B cell (primary cell): ENCODE measurements at regions of chr17 and their contacts with region 1.

Region 1: GRCh38 chr17:44218344-44219107 is 949 bp downstream of the UBTF start:
- DNase-seq: peak; percentile 93
- ATAC-seq: peak; percentile 46
- H3K4me3 ChIP-seq: peak overlapping the region; percentile 61 to 87 (median 74)
- H3K4me3 Mint-ChIP-seq: peak overlapping the region; percentile 84
- H3K27ac ChIP-seq: peak overlapping the region; percentile 88 to 89
- H3K27ac Mint-ChIP-seq: peak overlapping the region; percentile 98
- H3K4me1 ChIP-seq: peaks cover 49 to 53% of the 10 kb centered on the region in 2 donors
- H3K4me1 Mint-ChIP-seq: peaks cover 56% of the 10 kb centered on the region
- H3K27me3 ChIP-seq: no peaks in the 10 kb centered on the region
- H3K27me3 Mint-ChIP-seq: no peaks in the 10 kb centered on the region
- CTCF ChIP-seq: peak; percentile 52

Region 2: GRCh38 chr17:44044067-44044466 is 174.5 kb before region 1 on chr17:
- CTCF ChIA-PET with region 1: no interaction called
- POLR2A ChIA-PET with region 1: no interaction called
- intact Hi-C with region 1: no loop called
- DNase-seq: no peak
- ATAC-seq: no peak
- H3K4me3 ChIP-seq: no peak overlapping the region
- H3K4me3 Mint-ChIP-seq: no peak overlapping the region
- H3K27ac ChIP-seq: no peak overlapping the region
- H3K27ac Mint-ChIP-seq: no peak overlapping the region
- H3K4me1 ChIP-seq: no peaks in the 10 kb centered on the region
- H3K4me1 Mint-ChIP-seq: peaks cover 9% of the 10 kb centered on the region
- H3K27me3 ChIP-seq: no peaks in the 10 kb centered on the region
- H3K27me3 Mint-ChIP-seq: no peaks in the 10 kb centered on the region
- CTCF ChIP-seq: no peak

Region 3: GRCh38 chr17:44070455-44071197 is 147.9 kb before region 1 on chr17 and contains the start of gene G6PC3:
- CTCF ChIA-PET with region 1: no interaction called
- POLR2A ChIA-PET with region 1: no interaction called
- intact Hi-C with region 1: loop called (anchors 1 kb)
- DNase-seq: peak; percentile 85
- ATAC-seq: peak; percentile 73
- H3K4me3 ChIP-seq: peak within 1 kb of the TSS; percentile 42 to 87 (median 73)
- H3K4me3 Mint-ChIP-seq: peak within 1 kb of the TSS; percentile 93
- H3K27ac ChIP-seq: peak within 1 kb of the TSS; percentile 31 to 65
- H3K27ac Mint-ChIP-seq: peak within 1 kb of the TSS; percentile 82
- H3K4me1 ChIP-seq: peaks cover 22 to 32% of the 10 kb centered on the region in 2 donors
- H3K4me1 Mint-ChIP-seq: peaks cover 36% of the 10 kb centered on the region
- H3K27me3 ChIP-seq: no peaks in the 10 kb centered on the region
- H3K27me3 Mint-ChIP-seq: no peaks in the 10 kb centered on the region
- CTCF ChIP-seq: no peak
- total RNA-seq, gene G6PC3: 26.7 and 28.5 TPM in 2 replicates

Region 4: DNA sequence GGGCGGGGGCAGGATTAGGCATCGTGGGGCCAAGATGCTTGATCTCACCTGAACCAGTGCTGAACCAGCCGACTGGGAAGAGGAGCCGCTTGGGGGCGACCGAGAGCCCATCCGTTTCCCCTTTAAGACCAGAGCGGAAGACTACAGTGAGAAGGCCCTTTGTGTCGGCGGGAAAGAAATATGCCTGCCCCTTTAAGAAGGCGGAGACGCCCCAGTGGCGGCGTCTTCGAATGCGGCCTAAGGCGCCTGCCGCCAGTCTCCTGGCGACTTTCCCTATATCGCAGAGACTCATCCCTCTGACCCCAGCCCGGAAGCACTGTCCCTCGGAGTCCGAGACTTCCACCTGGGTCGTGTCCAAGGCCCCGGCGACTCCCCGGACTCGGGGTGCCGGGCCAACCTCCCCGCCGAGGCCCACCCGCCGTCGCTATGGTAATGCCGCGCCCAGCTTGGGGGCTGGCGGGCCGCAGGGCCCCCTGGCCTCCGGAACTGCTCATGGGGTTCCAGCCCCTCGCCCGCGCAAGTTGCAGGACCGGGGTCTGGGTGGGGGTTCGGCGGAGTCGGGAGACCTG is 76.7 kb before region 1 on chr17 and contains the start of gene HROB:
- CTCF ChIA-PET with region 1: interaction called, 4 read pairs
- POLR2A ChIA-PET with region 1: no interaction called
- intact Hi-C with region 1: loop called (anchors 2 kb)
- DNase-seq: peak; percentile 97
- ATAC-seq: peak; percentile 99
- H3K4me3 ChIP-seq: peak within 1 kb of the TSS; percentile 41 to 85 (median 76)
- H3K4me3 Mint-ChIP-seq: peak within 1 kb of the TSS; percentile 87
- H3K27ac ChIP-seq: peak within 1 kb of the TSS; percentile 57 to 84
- H3K27ac Mint-ChIP-seq: peak within 1 kb of the TSS; percentile 61
- H3K4me1 ChIP-seq: peaks cover 9 to 11% of the 10 kb centered on the region in 2 donors
- H3K4me1 Mint-ChIP-seq: peaks cover 8% of the 10 kb centered on the region
- H3K27me3 ChIP-seq: peaks cover 0 to 20% (median 3%) of the 10 kb centered on the region in 4 experiments
- H3K27me3 Mint-ChIP-seq: peaks cover 14% of the 10 kb centered on the region
- CTCF ChIP-seq: peak; percentile 84
- total RNA-seq, gene HROB: 2.7 and 3.2 TPM in 2 replicates

Region 5: DNA sequence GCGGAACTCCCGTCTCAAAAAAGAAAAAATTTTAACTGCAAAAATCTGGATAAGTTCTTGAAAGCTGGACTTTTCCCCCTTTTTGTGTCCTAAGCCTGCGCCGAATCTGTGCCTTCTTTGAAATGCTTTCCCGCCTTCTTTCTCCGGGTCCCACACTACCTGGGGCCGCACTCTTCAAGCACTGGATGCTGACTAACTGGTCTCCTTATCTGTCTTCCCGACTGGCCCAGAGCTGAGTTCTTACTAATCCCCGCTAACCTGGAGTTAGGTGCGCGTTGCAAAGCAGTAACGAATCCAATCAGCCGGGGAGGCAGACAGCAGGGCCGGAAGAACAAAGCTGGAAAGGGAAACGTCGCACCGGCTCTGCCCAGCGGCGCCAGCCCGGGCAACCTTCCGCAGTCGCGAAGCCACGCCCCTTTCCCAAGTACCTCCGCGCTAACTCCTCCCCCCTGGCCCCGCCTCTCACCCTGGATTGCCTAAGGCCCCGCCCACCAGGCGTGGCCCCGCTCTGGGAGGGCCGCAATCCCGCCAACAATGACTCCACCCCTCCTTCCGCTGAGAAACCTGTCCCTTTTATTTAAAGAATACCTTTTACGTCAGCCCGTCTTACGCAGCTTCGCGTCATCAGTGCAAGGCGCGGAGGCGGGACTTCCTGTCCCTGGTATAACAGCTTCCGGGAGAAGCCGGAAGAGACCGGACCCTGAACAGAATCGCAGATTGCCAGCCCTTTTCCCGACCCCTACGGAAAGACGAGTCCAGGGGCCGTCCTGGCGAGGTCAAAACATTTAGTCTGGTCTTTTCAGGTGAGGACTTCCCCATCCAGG is 32.0 kb before region 1 on chr17 and contains the start of gene TMUB2:
- CTCF ChIA-PET with region 1: interaction called, 8 read pairs
- POLR2A ChIA-PET with region 1: interaction called, 13 read pairs
- intact Hi-C with region 1: loop called (anchors 1 kb)
- DNase-seq: peak; percentile 100
- ATAC-seq: peak; percentile 97
- H3K4me3 ChIP-seq: peak within 1 kb of the TSS; percentile 63 to 99 (median 90)
- H3K4me3 Mint-ChIP-seq: peak within 1 kb of the TSS; percentile 98
- H3K27ac ChIP-seq: peak within 1 kb of the TSS; percentile 93 to 97
- H3K27ac Mint-ChIP-seq: peak within 1 kb of the TSS; percentile 100
- H3K4me1 ChIP-seq: peaks cover 22 to 26% of the 10 kb centered on the region in 2 donors
- H3K4me1 Mint-ChIP-seq: peaks cover 40% of the 10 kb centered on the region
- H3K27me3 ChIP-seq: no peaks in the 10 kb centered on the region
- H3K27me3 Mint-ChIP-seq: no peaks in the 10 kb centered on the region
- CTCF ChIP-seq: no peak
- total RNA-seq, gene TMUB2: 50.9 and 52.3 TPM in 2 replicates

Region 6: DNA sequence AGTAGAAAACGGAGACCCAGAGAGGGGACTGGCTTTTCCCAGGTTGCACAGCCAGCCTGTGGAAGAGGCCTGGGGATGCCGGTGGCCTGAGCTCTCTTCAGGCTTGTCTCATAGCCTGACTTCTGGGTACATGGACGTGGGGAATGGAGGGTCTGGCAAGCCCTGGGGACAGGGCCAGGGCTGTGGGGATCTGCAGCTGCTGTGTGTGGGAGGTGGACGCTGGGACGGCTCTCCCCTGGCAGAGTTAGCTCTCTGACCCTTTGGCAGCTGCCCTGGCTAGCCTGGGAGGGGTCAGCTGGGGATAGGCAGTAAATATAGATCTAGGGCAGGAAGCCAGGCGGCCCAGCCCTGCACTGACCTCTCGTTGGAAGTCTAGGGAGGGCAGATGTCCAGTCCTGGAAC is 28.9 kb after region 1 on chr17:
- CTCF ChIA-PET with region 1: interaction called, 4 read pairs
- POLR2A ChIA-PET with region 1: interaction called, 13 read pairs
- intact Hi-C with region 1: no loop called
- DNase-seq: no peak
- ATAC-seq: no peak
- H3K4me3 ChIP-seq: no peak overlapping the region
- H3K4me3 Mint-ChIP-seq: no peak overlapping the region
- H3K27ac ChIP-seq: no peak overlapping the region
- H3K27ac Mint-ChIP-seq: no peak overlapping the region
- H3K4me1 ChIP-seq: peaks cover 34 to 47% of the 10 kb centered on the region in 2 donors
- H3K4me1 Mint-ChIP-seq: peaks cover 41% of the 10 kb centered on the region
- H3K27me3 ChIP-seq: no peaks in the 10 kb centered on the region
- H3K27me3 Mint-ChIP-seq: no peaks in the 10 kb centered on the region
- CTCF ChIP-seq: no peak

Region 7: GRCh38 chr17:44331249-44331760 is 112.8 kb after region 1 on chr17:
- CTCF ChIA-PET with region 1: interaction called, 13 read pairs
- POLR2A ChIA-PET with region 1: interaction called, 29 read pairs
- intact Hi-C with region 1: no loop called
- DNase-seq: peak; percentile 87
- ATAC-seq: peak; percentile 22
- H3K4me3 ChIP-seq: no peak overlapping the region
- H3K4me3 Mint-ChIP-seq: no peak overlapping the region
- H3K27ac ChIP-seq: no peak overlapping the region
- H3K27ac Mint-ChIP-seq: peak overlapping the region; percentile 38
- H3K4me1 ChIP-seq: peaks cover 8 to 33% of the 10 kb centered on the region in 2 donors
- H3K4me1 Mint-ChIP-seq: peaks cover 30% of the 10 kb centered on the region
- H3K27me3 ChIP-seq: no peaks in the 10 kb centered on the region
- H3K27me3 Mint-ChIP-seq: no peaks in the 10 kb centered on the region
- CTCF ChIP-seq: peak; percentile 93

Region 8: DNA sequence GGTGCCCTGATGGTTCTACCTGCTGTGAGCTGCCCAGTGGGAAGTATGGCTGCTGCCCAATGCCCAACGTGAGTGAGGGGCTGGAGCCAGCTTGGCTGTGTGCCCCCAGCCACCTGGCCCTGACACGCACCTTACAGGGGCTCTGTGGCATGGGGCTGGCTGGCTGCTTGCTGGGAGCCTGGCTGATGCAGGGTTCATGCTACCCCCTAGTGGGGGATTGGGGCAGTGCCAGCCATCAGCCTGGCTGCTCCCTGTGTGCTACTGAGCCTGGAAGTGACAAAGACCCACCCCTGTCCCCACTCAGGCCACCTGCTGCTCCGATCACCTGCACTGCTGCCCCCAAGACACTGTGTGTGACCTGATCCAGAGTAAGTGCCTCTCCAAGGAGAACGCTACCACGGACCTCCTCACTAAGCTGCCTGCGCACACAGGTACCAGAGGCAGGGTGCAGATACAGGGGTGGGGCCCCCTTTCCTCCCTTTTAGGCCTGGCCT is 132.3 kb after region 1 on chr17:
- CTCF ChIA-PET with region 1: interaction called, 98 read pairs
- POLR2A ChIA-PET with region 1: interaction called, 19 read pairs
- intact Hi-C with region 1: loop called (anchors 1 kb)
- DNase-seq: peak; percentile 83
- ATAC-seq: peak; percentile 41
- H3K4me3 ChIP-seq: no peak overlapping the region
- H3K4me3 Mint-ChIP-seq: peak overlapping the region; percentile 35
- H3K27ac ChIP-seq: no peak overlapping the region
- H3K27ac Mint-ChIP-seq: peak overlapping the region; percentile 58
- H3K4me1 ChIP-seq: peaks cover 40 to 46% of the 10 kb centered on the region in 2 donors
- H3K4me1 Mint-ChIP-seq: peaks cover 38% of the 10 kb centered on the region
- H3K27me3 ChIP-seq: no peaks in the 10 kb centered on the region
- H3K27me3 Mint-ChIP-seq: no peaks in the 10 kb centered on the region
- CTCF ChIP-seq: peak; percentile 85